Activated naive CD4-positive, alpha-beta T cell treated with anti-CD3 and anti-CD28 coated beads for 36 hours (primary cell): ENCODE measurements at regions of chr17 and their contacts with region 1.

Region 1: GRCh38 chr17:41738077-41738735 is 3.8 kb upstream of the HAP1 start:
- DNase-seq: peak; percentile 91
- H3K4me3 Mint-ChIP-seq: no peak overlapping the region
- H3K27ac Mint-ChIP-seq: no peak overlapping the region
- H3K4me1 Mint-ChIP-seq: peaks cover 2% of the 10 kb centered on the region
- H3K27me3 Mint-ChIP-seq: peaks cover 29% of the 10 kb centered on the region

Region 2: DNA sequence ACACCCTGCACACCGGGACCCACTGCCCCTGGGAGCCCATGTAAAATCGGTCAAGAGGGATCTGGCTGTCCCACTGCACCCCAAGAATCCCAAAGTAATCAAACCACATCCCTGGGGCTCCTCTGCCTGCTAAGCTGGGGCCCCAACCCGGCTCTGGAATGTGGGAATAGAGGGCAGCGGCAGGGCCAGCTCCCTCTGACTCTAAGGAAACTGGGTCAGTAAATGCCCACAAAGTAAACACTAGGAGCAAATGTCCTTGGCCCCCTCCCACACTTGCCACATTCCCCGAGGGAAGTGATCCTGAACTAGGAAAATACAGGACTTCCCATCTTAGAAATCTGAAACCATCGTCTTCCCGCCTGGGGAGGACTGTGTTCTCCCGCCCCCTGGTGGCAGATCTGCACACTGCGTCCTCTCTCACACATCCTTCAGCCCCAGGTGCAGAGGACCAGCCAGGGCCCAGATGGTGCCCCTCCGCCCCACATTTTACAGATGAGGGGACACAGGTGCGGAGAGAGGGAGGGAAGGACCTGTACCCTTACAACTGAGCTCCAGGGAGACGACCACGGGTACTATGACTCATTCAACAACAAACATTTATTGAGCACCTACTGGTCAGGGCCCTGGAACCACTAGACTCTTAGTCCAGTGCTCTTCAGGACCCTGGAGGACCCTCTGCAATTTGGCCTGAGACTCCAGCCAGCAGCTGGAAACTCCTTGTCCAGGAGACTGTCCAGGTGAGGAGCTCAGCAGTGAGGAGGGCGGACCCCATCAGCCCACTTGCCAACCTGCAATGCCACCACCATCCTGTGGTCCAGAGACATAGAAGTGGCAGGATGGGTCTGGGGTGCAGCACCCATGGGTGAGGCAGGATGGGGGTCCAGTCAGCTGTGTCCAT is 63.4 kb after region 1 on chr17:
- CTCF ChIA-PET with region 1: interaction called, 33 read pairs
- intact Hi-C with region 1: loop called (anchors 1 kb)
- DNase-seq: peak; percentile 84
- H3K4me3 Mint-ChIP-seq: no peak overlapping the region
- H3K27ac Mint-ChIP-seq: no peak overlapping the region
- H3K4me1 Mint-ChIP-seq: no peaks in the 10 kb centered on the region
- H3K27me3 Mint-ChIP-seq: no peaks in the 10 kb centered on the region

Region 3: GRCh38 chr17:41885733-41886132 is 147.5 kb after region 1 on chr17:
- CTCF ChIA-PET with region 1: no interaction called
- intact Hi-C with region 1: loop called (anchors 5 kb)
- DNase-seq: no peak
- H3K4me3 Mint-ChIP-seq: no peak overlapping the region
- H3K27ac Mint-ChIP-seq: no peak overlapping the region
- H3K4me1 Mint-ChIP-seq: no peaks in the 10 kb centered on the region
- H3K27me3 Mint-ChIP-seq: no peaks in the 10 kb centered on the region

Region 4: GRCh38 chr17:41959336-41960095 is 221.3 kb after region 1 on chr17:
- CTCF ChIA-PET with region 1: interaction called, 3 read pairs
- intact Hi-C with region 1: loop called (anchors 1 kb)
- DNase-seq: peak; percentile 19
- H3K4me3 Mint-ChIP-seq: no peak overlapping the region
- H3K27ac Mint-ChIP-seq: no peak overlapping the region
- H3K4me1 Mint-ChIP-seq: no peaks in the 10 kb centered on the region
- H3K27me3 Mint-ChIP-seq: no peaks in the 10 kb centered on the region